PC-9 (cell line): ENCODE measurements at regions of chr5 and their contacts with region 1.

Region 1: GRCh38 chr5:20972419-20972925 is 984.5 kb upstream of the CDH18 start:
- DNase-seq: peak; percentile 43 to 68
- H3K4me3 ChIP-seq: no peak overlapping the region
- H3K27ac ChIP-seq: no peak overlapping the region
- H3K4me1 ChIP-seq: no peaks in the 10 kb centered on the region
- H3K27me3 ChIP-seq: no peaks in the 10 kb centered on the region
- CTCF ChIP-seq: peak; percentile 42; the same call in 1 of the 2 replicates

Region 2: DNA sequence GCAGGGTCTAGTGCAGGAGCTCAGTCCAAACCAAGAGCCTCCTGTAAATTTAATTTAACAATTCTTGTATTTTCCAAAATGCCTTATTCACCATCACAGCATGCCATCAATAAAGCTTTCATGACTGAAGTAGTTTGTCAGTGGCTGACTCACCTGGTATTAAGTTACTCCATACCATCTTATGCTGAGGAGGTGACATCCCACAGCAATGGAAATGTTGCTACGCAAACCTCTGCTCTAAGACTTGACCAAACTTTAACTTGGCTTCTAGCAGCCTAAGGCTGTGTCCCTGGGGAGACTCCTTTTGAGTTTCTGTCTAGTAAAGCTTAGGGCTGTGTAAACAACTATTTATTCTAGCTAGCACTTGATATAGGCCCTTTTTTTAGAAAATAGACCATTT is 246.8 kb after region 1 on chr5:
- CTCF ChIA-PET with region 1: no interaction called
- POLR2A ChIA-PET with region 1: no interaction called
- intact Hi-C with region 1: loop called (anchors 5 kb)
- DNase-seq: peak in 1 of 2 experiments; percentile 27
- H3K4me3 ChIP-seq: no peak overlapping the region
- H3K27ac ChIP-seq: no peak overlapping the region
- H3K4me1 ChIP-seq: no peaks in the 10 kb centered on the region
- H3K27me3 ChIP-seq: no peaks in the 10 kb centered on the region
- CTCF ChIP-seq: no peak

Region 3: GRCh38 chr5:21391506-21391905 is 419.0 kb after region 1 on chr5:
- CTCF ChIA-PET with region 1: interaction called, 13 read pairs
- POLR2A ChIA-PET with region 1: no interaction called
- intact Hi-C with region 1: loop called (anchors 1 kb)
- DNase-seq: no peak
- H3K4me3 ChIP-seq: no peak overlapping the region
- H3K27ac ChIP-seq: no peak overlapping the region
- H3K4me1 ChIP-seq: no peaks in the 10 kb centered on the region
- H3K27me3 ChIP-seq: no peaks in the 10 kb centered on the region
- CTCF ChIP-seq: peak; percentile 59

Region 4: DNA sequence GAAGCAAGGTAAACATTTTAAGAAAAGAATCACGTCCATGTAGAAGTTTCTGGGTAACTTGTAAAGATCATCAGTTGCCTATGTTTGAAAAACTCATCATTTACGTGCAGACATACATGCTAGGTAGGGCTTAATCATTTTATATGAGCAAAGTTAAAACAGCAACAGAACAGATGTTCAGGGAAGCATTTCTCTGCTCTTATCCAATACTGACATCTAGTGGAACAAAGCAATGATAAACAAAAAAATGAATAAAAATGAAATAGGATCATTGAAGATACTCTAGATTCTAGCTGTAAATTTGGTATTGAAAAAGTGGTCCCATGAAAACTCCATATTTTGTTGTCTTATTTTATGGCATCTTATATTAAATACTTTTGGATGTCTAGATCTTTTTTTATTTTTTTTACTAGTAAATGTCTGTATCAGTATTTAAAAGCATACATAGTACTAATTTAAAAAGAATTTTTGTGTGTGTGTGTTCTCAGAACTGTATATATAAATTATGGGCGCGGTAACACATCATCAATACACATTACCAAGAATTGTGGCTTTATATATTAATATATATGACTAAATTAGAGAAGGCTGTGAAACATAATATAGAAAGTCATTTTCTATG is 830.5 kb after region 1 on chr5:
- CTCF ChIA-PET with region 1: no interaction called
- POLR2A ChIA-PET with region 1: no interaction called
- intact Hi-C with region 1: loop called (anchors 1 kb)
- DNase-seq: no peak
- H3K4me3 ChIP-seq: no peak overlapping the region
- H3K27ac ChIP-seq: no peak overlapping the region
- H3K4me1 ChIP-seq: no peaks in the 10 kb centered on the region
- H3K27me3 ChIP-seq: no peaks in the 10 kb centered on the region
- CTCF ChIP-seq: peak; percentile 78